Prostate gland (tissue), 2 donors: ENCODE measurements at regions of chr2 and their contacts with region 1.

Region 1: DNA sequence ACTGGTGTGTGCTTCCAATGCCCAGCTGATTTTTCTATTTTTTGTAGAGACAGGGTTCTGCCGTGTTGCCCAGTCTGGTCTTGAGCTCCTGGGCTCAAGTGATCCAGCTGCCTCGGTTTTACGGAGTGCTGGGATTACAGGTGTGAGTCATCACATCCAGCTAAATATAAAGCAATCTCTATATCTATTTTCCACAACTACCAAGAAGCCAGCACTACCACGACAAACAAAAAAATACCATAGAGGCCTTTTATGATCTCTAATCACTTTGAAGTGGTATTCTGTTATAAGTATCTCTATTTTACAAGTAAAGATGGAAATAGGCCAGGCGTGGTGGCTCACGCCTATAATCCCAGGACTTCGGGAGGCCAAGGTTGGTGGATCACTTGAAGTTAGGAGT is 34.7 kb downstream of the C2orf74 start:
- DNase-seq: no peak
- H3K4me3 ChIP-seq: no peak overlapping the region
- H3K27ac ChIP-seq: no peak overlapping the region
- H3K4me1 ChIP-seq: no peaks in the 10 kb centered on the region
- H3K27me3 ChIP-seq: no peaks in the 10 kb centered on the region
- CTCF ChIP-seq: no peak
- POLR2A ChIP-seq: no peak

Region 2: DNA sequence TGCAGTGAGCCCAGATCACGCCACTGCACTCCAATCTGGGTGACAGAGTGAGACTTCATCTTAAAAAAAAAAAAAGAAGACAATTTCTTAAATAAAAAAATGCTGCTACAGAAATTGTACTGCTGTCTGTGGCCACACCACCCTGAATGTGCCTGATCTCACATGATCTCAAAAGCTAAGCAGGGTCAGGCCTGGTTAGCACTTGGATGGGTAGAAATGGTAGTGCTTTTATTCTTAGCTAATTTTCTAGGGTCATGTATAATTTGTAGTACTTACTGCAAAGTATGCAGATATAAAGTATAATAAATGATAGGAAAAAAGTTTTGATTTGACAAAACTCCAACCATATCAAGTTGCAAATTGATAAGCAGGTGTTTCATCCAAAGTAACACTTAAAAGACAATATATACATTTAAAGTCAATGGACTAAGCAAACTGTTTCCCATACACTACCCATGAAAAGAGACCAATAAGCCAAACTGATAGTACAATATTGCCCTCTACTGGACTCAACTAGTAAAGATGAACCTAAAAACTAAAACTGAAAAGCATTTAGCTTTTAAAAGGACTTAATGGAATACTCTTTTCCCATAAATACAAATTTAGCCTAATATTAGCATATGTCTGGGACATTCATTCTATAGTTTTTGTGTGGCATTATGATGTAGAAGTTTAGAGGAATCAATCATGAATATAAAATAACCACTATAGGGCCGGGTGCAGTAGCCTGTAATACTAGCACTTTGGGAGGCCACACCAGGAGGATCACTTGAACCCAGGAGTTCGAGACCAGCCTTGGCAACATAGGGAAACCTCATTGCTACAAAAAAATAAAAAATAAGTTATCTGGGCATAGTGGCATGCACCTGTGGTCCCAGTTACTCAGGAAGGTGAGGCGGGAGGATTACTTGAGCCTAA is 197.8 kb before region 1 on chr2:
- intact Hi-C with region 1: no loop called
- DNase-seq: no peak
- H3K4me3 ChIP-seq: no peak overlapping the region
- H3K27ac ChIP-seq: no peak overlapping the region
- H3K4me1 ChIP-seq: no peaks in the 10 kb centered on the region
- H3K27me3 ChIP-seq: no peaks in the 10 kb centered on the region
- CTCF ChIP-seq: peak in 3 of 4 experiments; percentile 57 to 79 (median 72)
- POLR2A ChIP-seq: no peak

Region 3: GRCh38 chr2:61233581-61233980 is 36.9 kb after region 1 on chr2:
- intact Hi-C with region 1: loop called (anchors 5 kb)
- DNase-seq: no peak
- H3K4me3 ChIP-seq: no peak overlapping the region
- H3K27ac ChIP-seq: no peak overlapping the region
- H3K4me1 ChIP-seq: no peaks in the 10 kb centered on the region
- H3K27me3 ChIP-seq: no peaks in the 10 kb centered on the region
- CTCF ChIP-seq: no peak
- POLR2A ChIP-seq: no peak

Region 4: DNA sequence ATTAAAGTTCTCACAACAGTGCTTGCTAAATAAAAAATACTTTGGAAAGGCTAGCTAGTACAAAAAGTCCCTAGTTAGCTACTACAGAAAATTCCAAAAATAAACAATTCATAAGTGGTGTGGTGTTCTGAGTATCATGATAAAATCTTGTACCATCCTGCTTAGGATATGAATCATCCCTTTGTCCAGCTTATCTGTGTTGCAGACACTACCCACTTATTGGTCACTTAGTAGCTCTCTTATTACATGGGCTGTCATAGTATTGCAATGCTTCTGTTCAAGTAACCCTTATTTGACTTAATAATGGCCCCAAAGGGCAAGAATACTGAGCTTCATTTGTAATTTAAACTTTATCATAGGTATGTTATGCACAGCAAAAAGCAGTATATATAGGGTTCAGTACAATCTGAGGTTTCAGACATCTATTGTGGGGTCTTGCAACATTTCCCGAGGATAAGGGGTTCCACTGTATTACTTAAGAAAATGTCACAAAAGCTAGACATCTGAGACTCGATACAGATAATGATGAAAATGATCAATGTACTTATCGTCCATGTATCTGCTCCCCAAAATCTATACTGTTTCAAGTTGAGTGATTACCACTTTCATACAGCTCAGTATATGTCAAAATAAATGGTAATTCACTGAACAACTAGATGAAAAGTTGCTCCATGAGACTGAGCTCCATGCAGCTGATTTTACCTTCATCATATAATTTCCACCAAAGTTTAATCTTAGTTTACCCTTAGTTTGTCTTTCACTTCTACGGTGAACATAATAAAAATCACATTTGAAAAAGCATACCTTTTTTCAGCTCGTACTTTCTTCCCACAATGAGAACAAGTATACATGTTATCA is 59.1 kb after region 1 on chr2:
- intact Hi-C with region 1: no loop called
- DNase-seq: no peak
- H3K4me3 ChIP-seq: no peak overlapping the region
- H3K27ac ChIP-seq: peak overlapping the region in 1 of 2 donors; percentile 17
- H3K4me1 ChIP-seq: no peaks in the 10 kb centered on the region
- H3K27me3 ChIP-seq: no peaks in the 10 kb centered on the region
- CTCF ChIP-seq: no peak
- POLR2A ChIP-seq: no peak

Region 5: GRCh38 chr2:61807036-61807757 is 610.5 kb after region 1 on chr2:
- intact Hi-C with region 1: no loop called
- DNase-seq: no peak
- H3K4me3 ChIP-seq: no peak overlapping the region
- H3K27ac ChIP-seq: no peak overlapping the region
- H3K4me1 ChIP-seq: no peaks in the 10 kb centered on the region
- H3K27me3 ChIP-seq: no peaks in the 10 kb centered on the region
- CTCF ChIP-seq: no peak
- POLR2A ChIP-seq: no peak